ENCODE measurements at regions of chr9 and their contacts with region 1.

Region 1: GRCh38 chr9:72443855-72444254 is 77.6 kb upstream of the TMC1 start:
- DNase-seq: peak in 3 of 9 experiments; percentile 5 to 51 (median 31)
- ATAC-seq: peak; percentile 64
- H3K4me3 ChIP-seq: no peak overlapping the region
- H3K4me3 Mint-ChIP-seq: no peak overlapping the region
- H3K27ac ChIP-seq: peak overlapping the region in 1 of 2 experiments; percentile 24
- H3K27ac Mint-ChIP-seq: peak overlapping the region; percentile 3
- H3K4me1 ChIP-seq: no peaks in the 10 kb centered on the region
- H3K4me1 Mint-ChIP-seq: peaks cover 12% of the 10 kb centered on the region
- H3K27me3 ChIP-seq: no peaks in the 10 kb centered on the region
- H3K27me3 Mint-ChIP-seq: peaks cover 2% of the 10 kb centered on the region
- CTCF ChIP-seq: no peak

Region 2: DNA sequence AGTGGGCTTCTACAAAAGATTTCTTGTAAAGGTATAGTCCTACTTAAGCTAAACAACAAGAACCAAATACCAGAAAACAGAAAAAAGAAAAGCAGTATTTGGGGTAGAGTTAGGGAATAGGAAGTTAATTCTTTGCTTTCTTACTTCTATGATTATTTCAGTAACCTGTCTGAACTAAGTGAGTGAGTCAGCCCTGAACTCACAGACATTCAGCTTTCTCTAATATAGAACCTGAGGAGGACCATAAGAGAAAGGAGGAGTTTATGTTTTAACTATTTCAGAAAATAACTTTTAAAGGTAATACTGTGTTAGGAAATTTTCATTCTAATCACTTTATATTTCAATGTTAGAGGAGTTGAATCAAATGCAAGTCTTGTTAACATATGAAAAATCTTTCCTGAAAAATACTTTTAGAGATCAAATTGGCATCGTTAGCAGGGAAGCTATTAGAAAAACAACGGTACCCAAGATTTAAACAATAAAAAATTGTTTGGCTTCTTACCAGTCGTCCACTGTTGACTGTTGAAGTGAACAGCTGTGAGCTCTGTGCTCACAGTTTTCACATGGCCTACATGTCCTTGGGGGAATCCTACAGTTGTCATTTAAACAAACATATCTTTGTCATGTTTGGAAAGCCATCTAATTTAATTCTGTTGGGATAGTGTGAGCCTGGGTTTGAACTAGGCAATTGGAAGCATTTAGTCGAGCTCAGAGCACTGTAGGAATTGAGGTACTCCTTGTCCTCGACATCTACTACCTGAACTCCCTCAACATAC is 59.0 kb before region 1 on chr9:
- CTCF ChIA-PET with region 1: no interaction called
- POLR2A ChIA-PET with region 1: no interaction called
- intact Hi-C with region 1: loop called in 1 of 2 experiments (anchors 5 kb)
- DNase-seq: no peak
- ATAC-seq: no peak
- H3K4me3 ChIP-seq: no peak overlapping the region
- H3K4me3 Mint-ChIP-seq: no peak overlapping the region
- H3K27ac ChIP-seq: no peak overlapping the region
- H3K27ac Mint-ChIP-seq: no peak overlapping the region
- H3K4me1 ChIP-seq: no peaks in the 10 kb centered on the region
- H3K4me1 Mint-ChIP-seq: peaks cover 5% of the 10 kb centered on the region
- H3K27me3 ChIP-seq: no peaks in the 10 kb centered on the region
- H3K27me3 Mint-ChIP-seq: no peaks in the 10 kb centered on the region
- CTCF ChIP-seq: no peak

Region 3: DNA sequence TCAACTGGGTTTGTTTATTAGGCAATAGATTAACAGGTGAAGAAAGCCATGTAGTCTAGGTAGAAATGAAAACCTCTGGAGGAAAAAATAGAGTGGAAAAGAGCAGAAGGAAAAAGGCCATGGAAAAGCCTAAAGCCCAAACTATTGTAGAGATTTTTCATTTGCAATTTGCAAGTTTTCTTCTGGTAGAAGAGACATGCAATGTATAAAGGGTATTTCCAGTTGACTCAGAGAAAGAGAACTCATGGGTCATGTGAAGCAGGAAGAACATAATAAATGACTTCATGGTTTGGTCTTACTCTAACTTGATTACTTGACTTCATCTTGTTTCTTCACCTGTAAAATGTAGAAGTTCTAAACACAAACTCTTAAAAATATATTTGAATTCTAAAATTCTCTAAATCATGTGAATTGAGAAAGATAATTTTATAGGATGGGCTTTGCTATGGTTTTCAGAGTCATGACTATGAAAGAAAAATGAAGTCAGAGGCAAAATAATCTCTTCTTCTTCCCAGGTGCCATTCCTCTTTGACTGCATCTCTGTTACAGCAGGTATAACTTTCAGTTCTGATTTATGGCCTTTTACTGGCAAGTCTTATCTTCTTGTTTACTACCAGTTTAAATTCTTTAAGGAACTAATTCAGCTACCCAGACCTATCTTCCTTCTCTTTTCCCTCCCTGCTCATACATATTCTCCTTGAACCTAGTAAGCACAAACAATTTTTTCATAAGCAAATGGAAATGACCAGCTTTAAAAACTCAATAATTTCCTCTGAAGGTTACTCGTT is 29.8 kb after region 1 on chr9:
- CTCF ChIA-PET with region 1: no interaction called
- POLR2A ChIA-PET with region 1: no interaction called
- intact Hi-C with region 1: loop called in 1 of 2 experiments (anchors 2 kb)
- DNase-seq: peak in 1 of 9 experiments; percentile 12
- ATAC-seq: peak; percentile 26
- H3K4me3 ChIP-seq: no peak overlapping the region
- H3K4me3 Mint-ChIP-seq: no peak overlapping the region
- H3K27ac ChIP-seq: no peak overlapping the region
- H3K27ac Mint-ChIP-seq: no peak overlapping the region
- H3K4me1 ChIP-seq: peaks cover 6% of the 10 kb centered on the region
- H3K4me1 Mint-ChIP-seq: peaks cover 22% of the 10 kb centered on the region
- H3K27me3 ChIP-seq: no peaks in the 10 kb centered on the region
- H3K27me3 Mint-ChIP-seq: no peaks in the 10 kb centered on the region
- CTCF ChIP-seq: no peak